Calu3 (cell line): ENCODE measurements at regions of chr1 and their contacts with region 1.

Region 1: GRCh38 chr1:20521960-20522861 is 14.3 kb upstream of the MUL1 start:
- DNase-seq: peak; percentile 76
- H3K4me3 Mint-ChIP-seq: no peak overlapping the region
- H3K27ac Mint-ChIP-seq: no peak overlapping the region
- H3K4me1 Mint-ChIP-seq: no peaks in the 10 kb centered on the region
- H3K27me3 Mint-ChIP-seq: peaks cover 8% of the 10 kb centered on the region
- CTCF ChIP-seq: peak; percentile 65

Region 2: DNA sequence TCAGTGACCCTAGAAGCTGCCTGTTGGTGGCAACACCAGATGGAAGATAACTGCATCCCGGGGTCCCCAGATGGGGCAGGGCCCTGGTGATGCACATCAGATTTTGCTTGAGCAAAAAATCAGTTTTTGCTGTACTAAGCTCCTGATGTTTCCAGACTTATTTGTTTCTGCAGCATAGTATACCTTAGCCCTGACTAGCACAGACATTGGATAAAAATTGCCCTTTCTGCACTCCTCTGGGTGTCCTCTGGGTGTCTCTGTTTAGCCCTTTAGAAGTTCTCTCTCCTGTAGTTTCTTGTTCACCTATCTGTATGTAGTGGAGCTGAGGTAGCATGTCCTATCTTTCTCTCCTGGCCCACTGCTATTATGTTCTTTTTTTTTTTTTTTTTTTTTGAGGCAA is 305.6 kb before region 1 on chr1:
- CTCF ChIA-PET with region 1: no interaction called
- intact Hi-C with region 1: no loop called
- DNase-seq: no peak
- H3K4me3 Mint-ChIP-seq: no peak overlapping the region
- H3K27ac Mint-ChIP-seq: no peak overlapping the region
- H3K4me1 Mint-ChIP-seq: peaks cover 14% of the 10 kb centered on the region
- H3K27me3 Mint-ChIP-seq: peaks cover 1% of the 10 kb centered on the region
- CTCF ChIP-seq: no peak

Region 3: GRCh38 chr1:20633190-20634064 is 111.2 kb after region 1 on chr1 and contains the start of gene PINK1:
- CTCF ChIA-PET with region 1: no interaction called
- intact Hi-C with region 1: loop called (anchors 1 kb)
- DNase-seq: peak; percentile 84
- H3K4me3 Mint-ChIP-seq: peak within 1 kb of the TSS; percentile 72
- H3K27ac Mint-ChIP-seq: no peak within 1 kb of the TSS
- H3K4me1 Mint-ChIP-seq: no peaks in the 10 kb centered on the region
- H3K27me3 Mint-ChIP-seq: no peaks in the 10 kb centered on the region
- CTCF ChIP-seq: peak; percentile 96
- total RNA-seq, gene PINK1: 11.2 and 11.9 TPM in 2 replicates

Region 4: DNA sequence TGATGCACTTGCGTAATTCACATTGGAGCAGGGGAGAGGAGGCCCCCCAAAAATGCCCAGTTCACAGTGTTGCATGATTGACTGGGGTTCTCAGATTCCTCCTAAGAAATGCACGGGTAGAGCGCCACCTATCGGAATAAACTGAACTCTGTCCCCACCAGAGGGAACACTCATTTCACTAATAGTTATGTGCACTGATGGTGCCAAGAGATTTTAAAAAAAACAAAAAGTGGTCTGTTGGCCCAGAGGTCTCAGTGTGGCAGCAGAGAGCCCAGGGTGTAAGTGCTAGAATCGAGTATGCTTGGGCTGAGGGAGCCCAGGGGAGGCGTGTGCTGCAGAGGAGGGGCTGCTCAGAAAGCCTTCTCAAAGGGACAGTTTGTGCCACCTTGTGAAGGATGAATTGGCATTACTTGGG is 118.0 kb after region 1 on chr1:
- CTCF ChIA-PET with region 1: no interaction called
- intact Hi-C with region 1: loop called (anchors 1 kb)
- DNase-seq: peak; percentile 49
- H3K4me3 Mint-ChIP-seq: no peak overlapping the region
- H3K27ac Mint-ChIP-seq: no peak overlapping the region
- H3K4me1 Mint-ChIP-seq: no peaks in the 10 kb centered on the region
- H3K27me3 Mint-ChIP-seq: no peaks in the 10 kb centered on the region
- CTCF ChIP-seq: peak; percentile 74